GM18951 (cell line): ENCODE measurements at regions of chr10 and their contacts with region 1.

Region 1: GRCh38 chr10:114103284-114103683 is 59.6 kb downstream of the ADRB1 start:
- POLR2A ChIP-seq: no peak

Region 2: DNA sequence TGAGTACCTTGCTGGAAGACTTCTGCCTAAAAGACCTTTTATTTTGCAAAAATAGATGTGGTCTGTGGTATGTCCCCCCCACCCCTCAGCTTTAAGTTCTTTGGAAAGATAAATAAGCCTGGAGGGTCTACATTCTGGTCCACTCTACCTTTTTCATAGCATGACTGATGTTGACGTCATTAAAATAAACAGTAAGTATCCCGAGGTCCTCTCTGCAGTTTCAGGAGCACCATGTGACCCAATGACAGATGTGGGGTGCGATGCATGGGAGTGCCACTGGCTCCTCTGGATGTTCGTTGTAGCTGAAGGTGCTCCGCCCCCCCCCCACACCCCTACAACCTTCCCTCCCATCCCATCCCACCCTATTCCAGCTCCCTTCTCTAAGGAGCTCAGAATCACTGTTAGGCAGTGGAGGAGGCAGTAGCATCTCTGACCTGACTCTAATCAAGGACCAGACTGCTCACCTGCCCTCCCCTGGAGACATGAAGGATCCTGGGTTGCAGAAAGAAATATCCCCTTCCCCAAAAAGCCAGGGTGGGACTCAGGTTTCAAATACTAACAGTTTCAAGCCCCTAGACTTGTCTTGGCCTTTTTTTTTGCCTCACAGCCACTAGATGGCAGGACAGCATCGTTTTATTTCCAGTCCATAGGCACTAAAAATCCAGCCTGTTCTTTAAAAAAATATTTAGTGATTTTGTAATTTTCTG is 398.5 kb before region 1 on chr10:
- in situ Hi-C with region 1: loop called (anchors 10 kb)
- POLR2A ChIP-seq: no peak

Region 3: GRCh38 chr10:113808168-113808567 is 295.1 kb before region 1 on chr10:
- in situ Hi-C with region 1: loop called (anchors 5 kb)
- POLR2A ChIP-seq: no peak

Region 4: DNA sequence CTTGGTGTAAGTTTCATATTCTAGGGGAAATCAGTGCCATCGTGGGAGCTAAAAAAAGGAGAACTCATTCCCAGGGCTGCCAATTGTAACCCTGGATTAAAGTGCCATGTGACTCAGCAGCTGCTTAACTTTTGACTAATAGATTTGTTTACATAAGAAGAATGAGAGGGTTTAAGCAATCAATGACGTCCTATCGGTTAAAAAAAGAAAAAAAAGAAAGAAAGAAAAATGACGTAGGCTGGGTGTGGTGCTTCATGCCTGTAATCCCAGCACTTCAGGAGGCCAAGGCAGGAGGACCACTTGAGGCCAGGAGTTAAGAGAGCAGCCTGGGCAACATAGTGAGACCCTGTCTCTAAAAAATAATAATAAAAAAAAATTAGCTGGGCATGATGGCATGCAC is 417.2 kb after region 1 on chr10:
- in situ Hi-C with region 1: no loop called
- POLR2A ChIP-seq: no peak